A673 (cell line): ENCODE measurements at regions of chr11 and their contacts with region 1.

Region 1: DNA sequence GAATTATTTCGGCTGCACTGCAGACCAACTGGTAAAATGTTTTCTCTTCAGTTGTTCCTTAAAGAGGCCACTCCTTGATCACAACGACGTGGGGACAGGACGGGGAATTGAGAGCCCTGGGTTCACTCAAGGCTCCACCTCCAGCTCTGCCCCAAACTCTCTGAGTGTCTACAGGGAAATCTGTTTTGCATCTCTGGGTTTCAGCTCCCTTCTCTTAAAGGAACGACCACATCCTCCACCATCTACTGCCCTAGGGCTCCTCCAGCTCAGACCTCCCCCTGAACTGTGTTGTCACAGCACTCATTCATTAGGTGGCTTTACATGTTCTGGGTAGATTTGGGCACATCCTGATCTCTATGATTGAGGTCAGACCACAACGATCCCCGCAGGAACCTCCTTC is 5.1 kb upstream of the PPFIA1 start:
- DNase-seq: peak; percentile 48
- H3K4me3 ChIP-seq: no peak overlapping the region
- H3K27ac ChIP-seq: peak overlapping the region; percentile 82
- H3K4me1 ChIP-seq: peaks cover 42% of the 10 kb centered on the region
- H3K27me3 ChIP-seq: no peaks in the 10 kb centered on the region
- CTCF ChIP-seq: no peak

Region 2: GRCh38 chr11:70202898-70203748 is 62.2 kb before region 1 on chr11 and contains the start of gene FADD:
- CTCF ChIA-PET with region 1: no interaction called
- POLR2A ChIA-PET with region 1: no interaction called
- intact Hi-C with region 1: loop called (anchors 5 kb)
- DNase-seq: peak; percentile 97
- H3K4me3 ChIP-seq: peak within 1 kb of the TSS; percentile 83
- H3K27ac ChIP-seq: peak within 1 kb of the TSS; percentile 93
- H3K4me1 ChIP-seq: peaks cover 10% of the 10 kb centered on the region
- H3K27me3 ChIP-seq: no peaks in the 10 kb centered on the region
- CTCF ChIP-seq: no peak
- total RNA-seq, gene FADD: 53.7 and 62.7 TPM in 2 replicates